GM12878 (cell line): ENCODE measurements at regions of chr17 and their contacts with region 1.

Region 1: DNA sequence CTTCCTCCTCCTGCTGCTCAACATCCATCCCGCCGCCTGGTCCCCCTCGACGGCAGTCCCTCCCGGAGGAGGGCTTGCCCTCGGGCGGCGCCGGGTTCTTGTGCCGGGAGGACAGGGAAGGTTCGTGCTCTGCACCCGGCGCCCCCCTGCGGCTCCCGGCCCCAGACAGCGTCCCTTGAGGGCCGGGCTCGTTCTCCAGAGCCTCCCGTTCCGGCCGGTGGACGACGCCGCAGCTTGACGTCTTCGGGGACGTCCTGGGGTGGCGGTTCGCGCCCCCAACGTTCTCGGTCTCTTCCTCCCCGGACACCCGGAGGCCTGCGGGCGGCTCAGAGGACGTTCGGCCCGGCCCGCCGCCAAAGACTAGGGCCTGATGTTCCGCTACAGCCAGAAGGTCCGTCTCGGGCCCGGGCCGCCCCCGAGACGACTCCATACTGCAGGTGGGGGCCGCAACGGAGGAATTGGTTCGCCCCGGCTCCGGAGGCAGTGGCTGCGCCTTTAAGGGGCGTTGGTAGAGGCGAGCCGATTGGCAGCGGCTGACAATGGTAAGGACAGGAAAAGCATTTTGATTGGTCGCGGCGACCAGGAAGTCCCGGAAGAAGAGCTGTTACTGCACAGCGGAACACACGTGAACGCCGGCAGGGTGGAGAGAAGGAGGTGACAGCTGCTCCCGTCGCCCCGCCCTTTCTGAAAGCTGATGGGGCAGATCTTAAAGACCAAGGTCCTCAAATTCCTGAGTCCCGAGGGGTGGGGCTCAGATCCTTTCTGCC is at the start of gene BORCS6:
- DNase-seq: peak; percentile 94
- ATAC-seq: peak; percentile 75
- H3K4me3 ChIP-seq: peak within 1 kb of the TSS; percentile 75
- H3K27ac ChIP-seq: peak within 1 kb of the TSS; percentile 90
- H3K4me1 ChIP-seq: peaks cover 17% of the 10 kb centered on the region
- H3K27me3 ChIP-seq: no peaks in the 10 kb centered on the region
- CTCF ChIP-seq: peak in 2 of 3 experiments; percentile 8 to 16; a peak in 2 of 6 replicates
- EP300 ChIP-seq: no peak
- POLR2A ChIP-seq: peak; percentile 90
- RAD21 ChIP-seq: no peak
- polyA plus RNA-seq, gene BORCS6: 0.37 to 0.64 TPM

Region 2: GRCh38 chr17:7479404-7480221 is 710.3 kb before region 1 on chr17 and contains the start of gene ZBTB4:
- CTCF ChIA-PET with region 1: no interaction called
- POLR2A ChIA-PET with region 1: no interaction called
- RAD21 ChIA-PET with region 1: no interaction called
- SMC1A ChIA-PET with region 1: no interaction called
- in situ Hi-C with region 1: no loop called
- intact Hi-C with region 1: no loop called
- DNase-seq: no peak
- ATAC-seq: peak; percentile 17
- H3K4me3 ChIP-seq: peak within 1 kb of the TSS; percentile 89
- H3K27ac ChIP-seq: peak within 1 kb of the TSS; percentile 64
- H3K4me1 ChIP-seq: peaks cover 11% of the 10 kb centered on the region
- H3K27me3 ChIP-seq: no peaks in the 10 kb centered on the region
- CTCF ChIP-seq: no peak
- EP300 ChIP-seq: no peak
- POLR2A ChIP-seq: peak; percentile 68; the same call in 1 of the 2 replicates
- RAD21 ChIP-seq: no peak
- polyA plus RNA-seq, gene ZBTB4: 2.0 to 3.0 TPM

Region 3: DNA sequence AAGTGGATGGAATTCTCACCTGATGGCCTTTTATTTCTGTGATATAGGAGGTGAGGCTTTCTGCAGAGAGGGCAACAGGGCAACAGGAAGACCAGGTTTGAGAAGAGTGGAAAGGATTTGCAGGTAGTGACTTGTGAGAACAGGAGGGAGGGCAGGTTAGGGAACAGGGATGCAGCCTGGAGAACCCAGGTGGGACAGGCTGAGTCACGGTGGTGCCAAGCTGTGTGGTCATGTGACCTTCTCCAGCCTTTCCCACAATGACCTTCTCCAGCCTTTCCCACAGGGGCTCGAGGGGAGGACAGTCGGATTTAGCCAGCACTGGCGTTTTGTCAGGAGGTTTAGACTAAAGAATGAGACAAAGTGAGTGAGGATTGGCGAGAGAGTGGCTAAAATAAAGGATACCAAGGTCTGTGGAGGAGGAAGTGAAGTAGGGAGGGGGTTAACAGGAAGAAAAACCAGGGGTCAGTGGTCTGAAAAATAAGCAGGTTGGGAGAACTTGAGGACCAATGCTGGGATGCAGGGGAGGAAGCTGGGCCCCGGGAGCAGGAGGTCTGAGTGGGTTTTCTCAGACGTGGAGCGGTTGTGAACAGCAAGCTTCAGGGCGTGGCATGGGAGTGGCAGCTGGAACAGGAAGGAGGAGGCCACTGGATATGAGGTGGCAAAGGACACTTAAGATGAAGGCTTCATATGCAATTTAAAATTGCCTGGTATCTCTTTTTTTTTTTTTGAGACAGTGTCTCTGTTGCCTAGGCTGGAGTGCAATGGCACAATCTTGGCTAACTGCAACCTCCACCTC is 434.6 kb before region 1 on chr17:
- CTCF ChIA-PET with region 1: no interaction called
- POLR2A ChIA-PET with region 1: no interaction called
- RAD21 ChIA-PET with region 1: no interaction called
- SMC1A ChIA-PET with region 1: no interaction called
- in situ Hi-C with region 1: no loop called
- intact Hi-C with region 1: no loop called
- DNase-seq: no peak
- ATAC-seq: no peak
- H3K4me3 ChIP-seq: no peak overlapping the region
- H3K27ac ChIP-seq: no peak overlapping the region
- H3K4me1 ChIP-seq: no peaks in the 10 kb centered on the region
- H3K27me3 ChIP-seq: no peaks in the 10 kb centered on the region
- CTCF ChIP-seq: no peak
- EP300 ChIP-seq: no peak
- POLR2A ChIP-seq: no peak
- RAD21 ChIP-seq: no peak

Region 4: DNA sequence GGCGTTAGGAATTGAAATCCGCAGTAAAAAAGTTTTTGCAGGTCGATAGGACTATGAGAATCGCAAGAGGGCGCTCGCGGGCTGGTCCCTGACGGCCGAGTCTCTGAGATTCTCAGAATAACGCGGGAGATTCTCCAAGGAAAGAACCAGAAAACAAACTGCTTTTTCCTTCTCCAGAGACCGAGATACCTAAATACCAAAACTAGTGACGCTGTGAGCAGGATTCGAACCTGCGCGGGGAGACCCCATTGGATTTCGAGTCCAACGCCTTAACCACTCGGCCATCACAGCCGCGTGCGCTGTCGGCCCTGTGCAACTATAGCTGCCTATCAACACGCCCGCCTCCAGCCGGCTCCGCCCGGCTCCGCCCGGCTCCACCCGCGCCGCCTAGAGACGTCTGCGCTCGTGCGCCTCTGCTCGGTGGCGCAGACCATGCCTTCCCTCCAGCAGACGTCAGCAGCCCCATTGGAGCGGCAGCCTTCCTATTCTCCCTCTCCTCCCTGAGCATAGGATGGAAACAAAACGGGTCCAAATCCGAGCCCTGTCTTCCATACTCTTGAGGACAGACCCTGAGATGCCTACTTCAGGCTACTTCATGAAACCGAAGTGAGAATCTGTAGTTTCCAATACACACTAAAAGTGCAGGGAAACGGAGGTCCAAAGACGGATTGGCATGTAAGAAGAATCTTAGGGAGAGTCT is 51.1 kb before region 1 on chr17:
- CTCF ChIA-PET with region 1: interaction called, 12 read pairs
- POLR2A ChIA-PET with region 1: interaction called, 6 read pairs
- RAD21 ChIA-PET with region 1: interaction called, 4 read pairs
- SMC1A ChIA-PET with region 1: interaction called, 4 read pairs
- in situ Hi-C with region 1: no loop called
- intact Hi-C with region 1: loop called (anchors 5 kb)
- DNase-seq: peak; percentile 94
- ATAC-seq: peak; percentile 93
- H3K4me3 ChIP-seq: peak overlapping the region; percentile 72
- H3K27ac ChIP-seq: peak overlapping the region; percentile 97
- H3K4me1 ChIP-seq: peaks cover 7% of the 10 kb centered on the region
- H3K27me3 ChIP-seq: no peaks in the 10 kb centered on the region
- CTCF ChIP-seq: peak; percentile 68 to 78 (median 76)
- EP300 ChIP-seq: 0 out of 4 replicates have a peak, but pooled peaks of 1 of the 2 experiments have one; percentile 4
- POLR2A ChIP-seq: peak; percentile 81
- RAD21 ChIP-seq: peak; percentile 57

Region 5: DNA sequence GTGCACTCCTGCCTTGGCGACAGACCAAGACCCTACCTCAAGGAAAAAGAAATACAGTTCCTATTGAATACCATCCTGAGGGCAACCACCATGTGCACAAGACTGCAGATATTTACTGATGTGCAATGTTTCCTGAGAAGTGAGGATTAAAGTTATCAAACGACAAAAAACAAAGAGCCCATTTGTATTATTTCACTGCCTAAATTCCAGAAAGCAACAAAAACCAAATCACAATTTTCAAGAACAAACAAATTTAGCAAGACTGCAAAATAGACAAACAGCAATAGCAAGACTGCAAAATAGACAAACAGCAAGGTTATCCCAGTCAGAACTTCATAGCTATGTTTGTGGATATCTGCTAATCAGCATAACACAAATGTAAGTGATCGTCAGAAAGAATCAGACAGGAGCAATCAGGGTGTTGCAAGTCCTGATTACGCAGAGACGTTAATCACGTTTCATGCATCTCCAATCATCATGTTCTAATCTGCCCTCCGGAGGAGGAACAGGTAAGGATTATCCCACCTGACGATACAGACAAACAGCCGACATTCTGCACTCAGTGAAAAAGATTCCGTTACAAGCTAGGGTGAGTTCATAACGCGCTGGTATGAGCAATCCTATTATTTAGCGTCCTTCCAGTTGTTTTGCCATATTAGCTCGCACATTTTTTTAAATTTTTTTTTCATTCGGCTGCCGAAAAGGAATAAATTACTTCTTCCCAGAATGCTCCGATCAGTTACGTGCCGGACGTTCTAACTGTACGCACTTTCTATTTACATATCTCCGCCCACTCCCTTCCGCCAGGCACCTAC is 16.6 kb before region 1 on chr17:
- CTCF ChIA-PET with region 1: interaction called, 4 read pairs
- POLR2A ChIA-PET with region 1: interaction called, 31 read pairs
- RAD21 ChIA-PET with region 1: interaction called, 13 read pairs
- SMC1A ChIA-PET with region 1: interaction called, 5 read pairs
- in situ Hi-C with region 1: no loop called
- intact Hi-C with region 1: no loop called
- DNase-seq: peak; percentile 98
- ATAC-seq: peak; percentile 86
- H3K4me3 ChIP-seq: peak overlapping the region; percentile 65
- H3K27ac ChIP-seq: peak overlapping the region; percentile 99
- H3K4me1 ChIP-seq: peaks cover 14% of the 10 kb centered on the region
- H3K27me3 ChIP-seq: no peaks in the 10 kb centered on the region
- CTCF ChIP-seq: no peak
- EP300 ChIP-seq: peak in 1 of 2 experiments; percentile 59; a peak in 2 of 4 replicates
- POLR2A ChIP-seq: peak; percentile 99
- RAD21 ChIP-seq: no peak

Region 6: GRCh38 chr17:8209909-8210760 is 20.2 kb after region 1 on chr17 and contains the start of gene AURKB:
- CTCF ChIA-PET with region 1: interaction called, 6 read pairs
- POLR2A ChIA-PET with region 1: interaction called, 71 read pairs
- RAD21 ChIA-PET with region 1: interaction called, 40 read pairs
- SMC1A ChIA-PET with region 1: interaction called, 16 read pairs
- in situ Hi-C with region 1: no loop called
- intact Hi-C with region 1: no loop called
- DNase-seq: peak; percentile 91
- ATAC-seq: peak; percentile 94
- H3K4me3 ChIP-seq: peak within 1 kb of the TSS; percentile 95
- H3K27ac ChIP-seq: peak within 1 kb of the TSS; percentile 83
- H3K4me1 ChIP-seq: no peaks in the 10 kb centered on the region
- H3K27me3 ChIP-seq: no peaks in the 10 kb centered on the region
- CTCF ChIP-seq: no peak
- EP300 ChIP-seq: no peak; a peak in 1 of 4 replicates
- POLR2A ChIP-seq: peak; percentile 96
- RAD21 ChIP-seq: no peak
- polyA plus RNA-seq, gene AURKB: 107 to 121 TPM

Region 7: GRCh38 chr17:8294814-8295316 is 105.0 kb after region 1 on chr17:
- CTCF ChIA-PET with region 1: interaction called, 4 read pairs
- POLR2A ChIA-PET with region 1: interaction called, 11 read pairs
- RAD21 ChIA-PET with region 1: interaction called, 8 read pairs
- SMC1A ChIA-PET with region 1: interaction called, 7 read pairs
- in situ Hi-C with region 1: no loop called
- intact Hi-C with region 1: loop called (anchors 1 kb)
- DNase-seq: no peak
- ATAC-seq: no peak
- H3K4me3 ChIP-seq: peak overlapping the region; percentile 62
- H3K27ac ChIP-seq: peak overlapping the region; percentile 41
- H3K4me1 ChIP-seq: peaks cover 21% of the 10 kb centered on the region
- H3K27me3 ChIP-seq: no peaks in the 10 kb centered on the region
- CTCF ChIP-seq: no peak
- EP300 ChIP-seq: no peak
- POLR2A ChIP-seq: no peak
- RAD21 ChIP-seq: no peak